Gastrocnemius medialis (tissue), 4 donors: ENCODE measurements at regions of chr16 and their contacts with region 1.

Region 1: DNA sequence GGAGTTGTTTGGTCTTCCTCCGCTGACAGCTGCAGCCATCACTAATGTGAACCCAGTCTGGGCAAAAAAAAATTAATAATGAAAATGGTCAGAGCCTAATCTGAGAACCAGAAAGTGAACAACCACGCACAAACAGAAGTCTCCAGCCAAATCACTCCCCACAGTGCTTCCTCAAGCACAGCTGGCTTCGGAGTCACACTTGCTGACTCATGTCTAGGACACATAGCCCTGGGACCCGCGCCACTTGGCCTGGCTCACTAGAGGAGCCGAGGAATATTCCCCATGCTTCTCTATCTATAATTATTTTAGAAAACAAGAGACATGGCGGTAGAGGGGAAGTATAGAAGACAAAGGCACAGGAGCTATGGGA is 109.1 kb downstream of the ZFHX3 start:
- DNase-seq: peak; percentile 90 to 93
- ATAC-seq: peak; percentile 87
- H3K4me3 ChIP-seq: peak overlapping the region; percentile 31 to 47 (median 36)
- H3K27ac ChIP-seq: peak overlapping the region; percentile 85 to 95 (median 88)
- H3K4me1 ChIP-seq: peaks cover 59 to 64% of the 10 kb centered on the region in 2 donors
- H3K27me3 ChIP-seq: no peaks in the 10 kb centered on the region
- CTCF ChIP-seq: no peak
- POLR2A ChIP-seq: peak in 1 of 2 donors; percentile 34

Region 2: GRCh38 chr16:73011926-73012325 is 73.1 kb after region 1 on chr16:
- in situ Hi-C with region 1: no loop called
- intact Hi-C with region 1: loop called (anchors 2 kb)
- DNase-seq: peak; percentile 72 to 84
- ATAC-seq: peak; percentile 86 to 87
- H3K4me3 ChIP-seq: peak overlapping the region in 1 of 4 donors; percentile 28
- H3K27ac ChIP-seq: peak overlapping the region; percentile 75 to 83 (median 81)
- H3K4me1 ChIP-seq: peaks cover 76 to 84% of the 10 kb centered on the region in 2 donors
- H3K27me3 ChIP-seq: no peaks in the 10 kb centered on the region
- CTCF ChIP-seq: peak in 4 of 5 experiments; percentile 20 to 47 (median 36)
- POLR2A ChIP-seq: peak; percentile 12 to 36

Region 3: GRCh38 chr16:73047518-73048291 is 108.9 kb after region 1 on chr16 and contains the start of gene ZFHX3:
- in situ Hi-C with region 1: no loop called
- intact Hi-C with region 1: loop called (anchors 2 kb)
- DNase-seq: peak; percentile 81 to 90
- ATAC-seq: peak; percentile 54 to 56
- H3K4me3 ChIP-seq: peak within 1 kb of the TSS; percentile 85 to 97 (median 89)
- H3K27ac ChIP-seq: peak within 1 kb of the TSS; percentile 95 to 99 (median 99)
- H3K4me1 ChIP-seq: peaks cover 86 to 89% of the 10 kb centered on the region in 2 donors
- H3K27me3 ChIP-seq: no peaks in the 10 kb centered on the region
- CTCF ChIP-seq: peak in 2 of 5 experiments; percentile 2 to 33
- POLR2A ChIP-seq: peak; percentile 78 to 91
- total RNA-seq, gene ZFHX3: 14.0 to 28.5 (median 27.3) TPM

Region 4: GRCh38 chr16:73058221-73058615 is 119.4 kb after region 1 on chr16:
- in situ Hi-C with region 1: no loop called
- intact Hi-C with region 1: no loop called
- DNase-seq: no peak
- ATAC-seq: peak; percentile 26 to 37
- H3K4me3 ChIP-seq: peak overlapping the region; percentile 64 to 75 (median 72)
- H3K27ac ChIP-seq: peak overlapping the region; percentile 94 to 99 (median 99)
- H3K4me1 ChIP-seq: peaks cover 38 to 58% of the 10 kb centered on the region in 2 donors
- H3K27me3 ChIP-seq: peaks cover 0 to 10% (median 0%) of the 10 kb centered on the region in 3 donors
- CTCF ChIP-seq: no peak
- POLR2A ChIP-seq: no peak